PC-9 (cell line): ENCODE measurements at regions of chr16 and their contacts with region 1.

Region 1: DNA sequence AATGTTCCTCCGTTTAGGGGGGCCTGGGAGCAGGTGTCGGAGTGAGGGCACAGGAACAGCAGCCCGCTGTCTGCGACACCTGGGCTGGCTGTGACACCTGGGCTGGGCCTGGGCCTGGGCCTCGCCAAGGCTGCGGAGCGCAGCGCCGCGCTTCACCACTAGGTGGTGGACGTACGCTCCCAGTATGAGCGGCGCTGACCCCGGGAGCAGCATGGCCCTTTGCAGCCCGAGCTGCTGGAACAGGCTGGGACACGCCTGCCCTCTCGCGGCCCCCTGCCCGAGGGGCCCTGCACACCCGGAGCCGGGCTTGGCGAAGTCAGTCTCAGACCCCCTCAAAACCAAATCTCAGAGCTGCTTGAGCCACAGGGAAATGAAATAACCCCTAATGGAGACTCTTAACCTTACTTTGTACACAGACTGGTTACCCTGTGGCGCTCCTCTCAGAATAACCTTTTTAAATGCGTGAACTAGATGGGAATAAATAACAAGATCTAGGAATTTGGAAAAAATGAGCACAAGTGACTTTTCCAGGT is 38.6 kb upstream of the FA2H start:
- DNase-seq: peak; percentile 60 to 85
- H3K4me3 ChIP-seq: no peak overlapping the region; the same call in 1 of the 2 replicates
- H3K27ac ChIP-seq: no peak overlapping the region
- H3K4me1 ChIP-seq: no peaks in the 10 kb centered on the region
- H3K27me3 ChIP-seq: no peaks in the 10 kb centered on the region
- CTCF ChIP-seq: peak; percentile 93

Region 2: GRCh38 chr16:73996624-73997339 is 816.4 kb before region 1 on chr16:
- CTCF ChIA-PET with region 1: no interaction called
- POLR2A ChIA-PET with region 1: no interaction called
- intact Hi-C with region 1: no loop called
- DNase-seq: no peak
- H3K4me3 ChIP-seq: no peak overlapping the region
- H3K27ac ChIP-seq: no peak overlapping the region
- H3K4me1 ChIP-seq: no peaks in the 10 kb centered on the region
- H3K27me3 ChIP-seq: peaks cover 16% of the 10 kb centered on the region
- CTCF ChIP-seq: no peak

Region 3: DNA sequence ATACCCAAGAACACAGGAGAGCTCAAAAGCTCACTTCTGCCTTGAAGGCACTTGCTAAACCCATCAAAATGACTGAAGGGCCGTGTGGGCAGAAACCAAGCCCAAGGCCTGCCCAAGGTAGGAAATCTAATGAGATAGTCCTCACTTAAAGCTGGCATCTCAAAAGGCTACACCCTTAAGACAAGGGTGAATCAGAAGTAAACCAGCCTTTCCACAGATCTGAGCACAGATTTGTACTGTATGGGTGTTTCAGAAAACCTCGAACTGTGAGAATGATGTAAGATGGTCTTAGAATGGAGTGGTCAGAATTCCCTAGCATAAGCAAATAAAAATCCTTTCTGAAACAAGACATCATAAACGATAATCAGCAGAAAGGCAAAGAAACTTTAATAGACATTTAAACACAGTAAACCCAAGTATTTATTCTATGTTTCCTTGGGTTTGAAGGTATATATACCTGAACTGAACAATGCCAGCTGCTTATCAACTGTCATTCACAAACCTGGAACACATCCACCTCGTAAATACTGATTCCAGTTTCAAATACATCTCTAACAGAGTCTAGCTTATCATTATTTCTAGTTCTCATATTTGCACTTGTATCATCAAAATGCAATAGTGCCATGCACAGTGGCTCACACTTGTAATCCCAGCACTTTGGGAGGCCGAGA is 244.1 kb before region 1 on chr16:
- CTCF ChIA-PET with region 1: no interaction called
- POLR2A ChIA-PET with region 1: no interaction called
- intact Hi-C with region 1: no loop called
- DNase-seq: peak in 1 of 2 experiments; percentile 53
- H3K4me3 ChIP-seq: no peak overlapping the region
- H3K27ac ChIP-seq: peak overlapping the region; percentile 50
- H3K4me1 ChIP-seq: peaks cover 5% of the 10 kb centered on the region; the same call in 1 of the 2 replicates
- H3K27me3 ChIP-seq: no peaks in the 10 kb centered on the region
- CTCF ChIP-seq: no peak

Region 4: GRCh38 chr16:74691093-74691855 is 121.9 kb before region 1 on chr16:
- CTCF ChIA-PET with region 1: no interaction called
- POLR2A ChIA-PET with region 1: no interaction called
- intact Hi-C with region 1: no loop called
- DNase-seq: no peak
- H3K4me3 ChIP-seq: no peak overlapping the region
- H3K27ac ChIP-seq: no peak overlapping the region
- H3K4me1 ChIP-seq: peaks cover 3% of the 10 kb centered on the region; the same call in 1 of the 2 replicates
- H3K27me3 ChIP-seq: no peaks in the 10 kb centered on the region
- CTCF ChIP-seq: no peak

Region 5: DNA sequence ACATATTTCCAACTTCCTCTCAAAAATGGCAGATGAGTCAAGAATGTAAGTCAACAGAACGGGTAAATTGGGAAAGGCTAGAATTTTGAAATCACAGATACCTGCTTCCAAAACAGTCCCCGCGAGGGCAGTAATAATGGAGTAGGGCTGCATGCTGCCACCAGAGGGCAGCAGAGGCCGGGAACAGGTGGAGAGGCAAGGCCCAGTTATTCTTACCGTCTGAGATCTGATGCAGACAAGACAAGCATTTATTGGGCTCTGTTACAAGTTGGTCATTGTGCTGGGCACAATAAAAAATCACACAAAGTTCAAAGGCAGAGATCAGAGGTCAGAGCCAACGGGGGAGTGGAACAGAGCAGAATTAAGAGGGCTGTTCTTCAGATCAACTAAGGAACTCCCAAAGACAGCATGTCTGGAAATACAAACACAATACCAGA is 103.7 kb before region 1 on chr16:
- CTCF ChIA-PET with region 1: no interaction called
- POLR2A ChIA-PET with region 1: no interaction called
- intact Hi-C with region 1: loop called (anchors 1 kb)
- DNase-seq: peak; percentile 79 to 81
- H3K4me3 ChIP-seq: no peak overlapping the region
- H3K27ac ChIP-seq: no peak overlapping the region
- H3K4me1 ChIP-seq: peaks cover 4% of the 10 kb centered on the region; the same call in 1 of the 2 replicates
- H3K27me3 ChIP-seq: no peaks in the 10 kb centered on the region
- CTCF ChIP-seq: peak; percentile 98

Region 6: GRCh38 chr16:74774203-74775116 is 38.7 kb before region 1 on chr16 and contains the start of gene FA2H:
- CTCF ChIA-PET with region 1: no interaction called
- POLR2A ChIA-PET with region 1: no interaction called
- intact Hi-C with region 1: loop called (anchors 1 kb)
- DNase-seq: peak; percentile 84 to 95
- H3K4me3 ChIP-seq: peak within 1 kb of the TSS; percentile 68
- H3K27ac ChIP-seq: no peak within 1 kb of the TSS
- H3K4me1 ChIP-seq: peaks cover 4% of the 10 kb centered on the region; the same call in 1 of the 2 replicates
- H3K27me3 ChIP-seq: no peaks in the 10 kb centered on the region
- CTCF ChIP-seq: peak; percentile 48; the same call in 1 of the 2 replicates
- total RNA-seq, gene FA2H: 3.5 and 4.8 TPM in 2 replicates

Region 7: GRCh38 chr16:74936902-74937560 is 123.9 kb after region 1 on chr16:
- CTCF ChIA-PET with region 1: no interaction called
- POLR2A ChIA-PET with region 1: no interaction called
- intact Hi-C with region 1: no loop called
- DNase-seq: peak in 1 of 2 experiments; percentile 51
- H3K4me3 ChIP-seq: no peak overlapping the region
- H3K27ac ChIP-seq: no peak overlapping the region
- H3K4me1 ChIP-seq: no peaks in the 10 kb centered on the region
- H3K27me3 ChIP-seq: no peaks in the 10 kb centered on the region
- CTCF ChIP-seq: no peak